ENCODE measurements at regions of chr1 and their contacts with region 1.

Region 1: DNA sequence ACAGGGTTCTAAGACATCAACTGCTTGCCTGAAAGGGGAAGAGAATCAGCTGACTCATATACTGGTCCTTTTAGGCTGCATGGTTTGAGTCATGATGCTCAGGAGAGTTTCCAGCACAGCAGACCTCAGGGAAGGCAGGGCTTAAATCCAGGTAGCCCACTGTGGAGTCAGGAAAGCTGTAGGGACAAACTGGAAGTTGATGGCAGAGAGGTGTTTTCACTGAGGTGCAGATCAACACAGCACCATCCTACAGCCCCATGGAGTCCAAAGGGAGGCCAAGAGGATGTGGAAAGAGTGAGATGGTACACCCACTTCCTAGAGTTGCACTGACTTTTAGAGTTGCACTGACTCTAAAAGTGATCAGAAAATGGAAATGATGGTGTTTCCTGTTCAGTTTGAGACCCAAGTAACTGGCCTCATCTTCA is 252.4 kb upstream of the DUSP10 start:
- DNase-seq: peak; percentile 85
- ATAC-seq: 0 out of 2 replicates have a peak, but pooled peaks have one; percentile 22
- H3K4me3 ChIP-seq: no peak overlapping the region
- H3K27ac ChIP-seq: peak overlapping the region; percentile 61
- H3K4me1 ChIP-seq: peaks cover 37% of the 10 kb centered on the region
- H3K27me3 ChIP-seq: no peaks in the 10 kb centered on the region
- CTCF ChIP-seq: no peak
- POLR2A ChIP-seq: no peak; the same call in 1 of the 2 replicates
- RAD21 ChIP-seq: no peak

Region 2: GRCh38 chr1:222042120-222042519 is 47.8 kb after region 1 on chr1:
- CTCF ChIA-PET with region 1: interaction called, 4 read pairs
- POLR2A ChIA-PET with region 1: interaction called, 10 read pairs
- dilution Hi-C with region 1: no loop called
- in situ Hi-C with region 1: no loop called
- intact Hi-C with region 1: no loop called
- DNase-seq: peak; percentile 55
- ATAC-seq: no peak
- H3K4me3 ChIP-seq: no peak overlapping the region
- H3K27ac ChIP-seq: no peak overlapping the region
- H3K4me1 ChIP-seq: peaks cover 22% of the 10 kb centered on the region
- H3K27me3 ChIP-seq: no peaks in the 10 kb centered on the region
- CTCF ChIP-seq: no peak
- POLR2A ChIP-seq: no peak
- RAD21 ChIP-seq: no peak